ENCODE measurements at regions of chr11 and their contacts with region 1.

Region 1: DNA sequence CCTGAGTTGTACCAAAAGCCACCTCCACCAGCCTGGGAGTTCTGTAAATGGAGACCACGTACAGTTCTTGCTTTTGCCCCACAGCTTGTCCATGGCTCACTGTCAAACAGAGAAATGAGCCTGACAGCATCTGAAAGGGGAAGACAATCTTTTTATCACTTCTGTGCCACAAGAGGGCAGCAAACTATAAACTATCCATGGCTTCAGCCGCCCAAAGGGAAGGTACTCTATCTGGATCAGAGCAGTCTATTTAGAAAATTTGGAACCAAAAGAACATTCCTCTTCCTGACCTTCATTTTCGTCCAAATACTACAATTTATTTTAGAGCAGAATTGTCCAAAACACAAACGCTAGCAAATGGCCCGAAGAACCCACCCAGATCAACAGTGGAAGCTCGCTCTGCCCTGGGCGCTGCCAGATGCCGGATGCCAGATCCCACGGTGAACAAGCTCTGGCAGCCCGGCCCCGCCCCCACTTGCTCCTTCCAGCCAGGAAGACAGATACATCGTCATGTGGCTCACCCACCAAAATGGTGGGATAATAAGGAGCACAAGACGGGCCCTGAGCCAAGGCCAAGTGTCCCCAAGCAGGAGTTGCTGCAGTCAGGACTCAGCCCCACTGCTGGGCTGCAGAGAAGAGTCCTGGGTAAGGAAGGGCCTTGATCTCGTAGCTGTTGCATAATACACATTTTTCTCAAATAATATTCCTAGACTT is 23.9 kb upstream of the SCGB1A1 start:
- DNase-seq: peak; percentile 67
- H3K4me3 Mint-ChIP-seq: no peak overlapping the region
- H3K27ac Mint-ChIP-seq: no peak overlapping the region
- H3K4me1 Mint-ChIP-seq: peaks cover 17% of the 10 kb centered on the region
- H3K27me3 Mint-ChIP-seq: no peaks in the 10 kb centered on the region

Region 2: DNA sequence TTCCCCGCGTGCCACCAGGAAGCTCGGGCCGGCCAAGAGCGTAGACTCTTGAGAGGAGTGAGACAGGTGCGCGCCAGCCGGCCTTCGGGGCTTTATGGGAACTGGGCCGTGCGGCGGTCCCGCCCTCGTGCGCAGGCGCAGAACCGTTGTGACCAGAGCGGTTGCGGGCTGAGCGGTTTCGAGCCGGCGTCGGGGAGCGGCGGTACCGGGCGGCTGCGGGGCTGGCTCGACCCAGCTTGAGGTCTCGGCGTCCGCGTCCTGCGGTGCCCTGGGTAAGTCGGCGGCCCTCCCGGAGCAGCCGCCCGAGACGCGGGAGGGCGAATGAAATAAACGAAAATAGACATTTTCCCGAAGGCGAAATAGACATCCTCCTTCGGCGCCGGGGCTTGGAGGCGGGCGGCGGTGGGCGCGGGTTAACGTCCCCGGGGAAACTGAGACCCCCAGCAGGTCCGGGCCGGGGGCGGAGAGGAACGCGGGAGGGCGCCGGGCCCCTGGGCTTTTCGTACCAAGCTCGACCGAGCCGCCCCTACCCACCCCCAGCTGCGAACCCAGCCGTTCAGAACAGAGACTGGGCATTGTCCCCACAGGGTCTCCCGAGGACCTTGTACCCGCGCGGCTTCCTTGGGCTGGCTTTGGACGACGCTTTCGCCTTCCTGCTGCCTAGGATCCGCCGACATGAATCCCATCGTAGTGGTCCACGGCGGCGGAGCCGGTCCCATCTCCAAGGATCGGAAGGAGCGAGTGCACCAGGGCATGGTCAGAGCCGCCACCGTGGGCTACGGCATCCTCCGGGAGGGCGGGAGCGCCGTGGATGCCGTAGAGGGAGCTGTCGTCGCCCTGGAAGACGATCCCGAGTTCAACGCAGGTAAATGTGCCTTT is 57.4 kb before region 1 on chr11 and contains the start of gene ASRGL1:
- CTCF ChIA-PET with region 1: interaction called, 24 read pairs
- intact Hi-C with region 1: no loop called
- DNase-seq: peak; percentile 75
- H3K4me3 Mint-ChIP-seq: peak within 1 kb of the TSS; percentile 83
- H3K27ac Mint-ChIP-seq: peak within 1 kb of the TSS; percentile 16
- H3K4me1 Mint-ChIP-seq: peaks cover 9% of the 10 kb centered on the region
- H3K27me3 Mint-ChIP-seq: peaks cover 7% of the 10 kb centered on the region
- total RNA-seq, gene ASRGL1: 9.5 to 11.6 TPM

Region 3: DNA sequence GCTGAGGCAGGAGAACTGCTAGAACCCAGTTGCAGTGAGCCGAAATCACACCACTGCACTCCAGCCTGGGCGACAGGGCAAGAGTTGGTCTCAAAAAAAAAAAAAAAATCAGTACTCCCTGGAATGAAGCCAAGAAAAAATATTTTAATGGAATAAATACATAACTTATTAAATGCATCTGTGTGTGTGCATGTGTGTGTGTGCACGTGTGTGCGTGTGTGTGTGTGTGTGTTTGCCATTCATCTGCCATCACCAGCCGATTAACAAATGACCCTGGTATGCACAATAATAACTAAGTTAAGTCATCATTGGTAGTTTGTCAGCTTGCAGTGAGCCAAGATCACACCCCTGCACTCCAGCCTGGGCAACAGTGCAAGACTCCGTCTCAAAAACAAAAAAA is 11.2 kb before region 1 on chr11:
- CTCF ChIA-PET with region 1: interaction called, 6 read pairs
- intact Hi-C with region 1: loop called (anchors 1 kb)
- DNase-seq: no peak
- H3K4me3 Mint-ChIP-seq: no peak overlapping the region
- H3K27ac Mint-ChIP-seq: no peak overlapping the region
- H3K4me1 Mint-ChIP-seq: peaks cover 11% of the 10 kb centered on the region
- H3K27me3 Mint-ChIP-seq: no peaks in the 10 kb centered on the region

Region 4: DNA sequence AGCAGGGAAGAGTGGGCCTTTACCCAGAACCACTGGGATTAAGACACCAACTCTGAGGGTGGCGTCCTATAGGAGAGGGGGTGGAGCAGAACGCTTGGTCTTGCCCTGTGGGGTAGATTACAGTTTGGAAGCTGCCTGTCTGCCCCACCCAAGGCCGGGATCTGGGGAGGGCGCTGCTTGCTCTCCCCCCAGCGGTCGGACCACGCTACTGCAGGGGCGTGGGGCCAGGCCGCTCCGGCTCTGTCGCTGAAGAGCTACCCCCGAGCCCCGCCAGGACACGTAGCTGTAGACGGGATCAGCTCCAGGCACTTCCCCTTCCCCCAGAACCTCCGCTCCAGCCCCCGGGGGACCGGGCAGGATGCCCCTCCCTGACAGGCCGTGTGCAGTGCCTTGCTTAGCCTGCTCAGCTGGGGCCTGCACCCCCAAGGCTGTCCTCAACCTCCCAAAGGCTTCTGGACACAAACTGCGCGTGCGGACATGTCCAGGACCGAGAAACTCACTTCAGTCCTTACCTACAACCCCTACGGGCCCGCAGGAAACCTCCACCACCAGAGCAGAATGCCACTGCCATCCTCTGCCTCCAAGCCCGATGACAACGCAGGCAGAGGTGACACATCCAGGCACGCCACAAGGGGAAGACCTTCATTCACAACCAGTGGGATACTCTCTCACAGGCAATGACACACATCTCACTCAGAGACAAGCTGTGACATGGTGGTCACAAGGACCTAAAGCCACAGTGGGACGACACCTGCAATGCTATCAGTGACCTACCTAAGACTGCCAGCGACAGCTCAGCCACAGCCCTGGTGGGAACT is 148.0 kb after region 1 on chr11:
- CTCF ChIA-PET with region 1: interaction called, 33 read pairs
- intact Hi-C with region 1: loop called (anchors 1 kb)
- DNase-seq: peak; percentile 78
- H3K4me3 Mint-ChIP-seq: peak overlapping the region; percentile 32
- H3K27ac Mint-ChIP-seq: no peak overlapping the region
- H3K4me1 Mint-ChIP-seq: peaks cover 70% of the 10 kb centered on the region
- H3K27me3 Mint-ChIP-seq: peaks cover 4% of the 10 kb centered on the region

Region 5: GRCh38 chr11:62694455-62695167 is 299.6 kb after region 1 on chr11:
- CTCF ChIA-PET with region 1: interaction called, 3 read pairs
- intact Hi-C with region 1: loop called (anchors 10 kb)
- DNase-seq: peak; percentile 85
- H3K4me3 Mint-ChIP-seq: no peak overlapping the region
- H3K27ac Mint-ChIP-seq: peak overlapping the region; percentile 4
- H3K4me1 Mint-ChIP-seq: no peaks in the 10 kb centered on the region
- H3K27me3 Mint-ChIP-seq: no peaks in the 10 kb centered on the region

Region 6: DNA sequence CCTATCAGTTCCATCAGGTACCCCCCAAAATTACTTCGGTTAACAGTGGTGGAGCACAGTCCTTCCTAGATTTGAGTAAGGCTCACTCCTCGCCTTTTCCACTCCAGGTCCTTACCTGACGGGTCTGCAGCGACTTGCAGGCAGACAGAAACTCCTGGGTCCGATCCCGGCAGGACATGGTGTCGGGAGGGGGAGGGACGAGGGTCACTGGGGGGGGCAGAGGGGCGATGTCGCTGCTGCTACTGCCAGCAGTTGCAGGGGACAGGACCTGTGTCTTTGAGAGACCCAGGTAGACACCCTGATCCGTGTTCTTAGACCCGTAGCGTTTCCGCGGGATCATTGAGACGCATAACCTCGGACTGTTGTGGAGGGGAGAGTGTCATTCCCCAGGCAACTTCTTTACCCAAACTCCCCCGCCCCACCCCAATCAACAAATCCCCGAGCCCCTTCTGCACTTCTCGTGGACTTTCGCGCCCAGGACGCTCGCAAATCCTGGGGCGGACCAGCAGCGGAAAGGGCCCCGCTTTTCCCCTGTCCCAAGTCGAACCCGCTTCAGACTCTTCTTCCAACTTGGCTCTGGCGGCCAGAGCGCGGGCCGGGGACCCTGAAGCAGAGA is 436.0 kb after region 1 on chr11:
- CTCF ChIA-PET with region 1: no interaction called
- intact Hi-C with region 1: no loop called
- DNase-seq: peak; percentile 23
- H3K4me3 Mint-ChIP-seq: peak overlapping the region; percentile 99
- H3K27ac Mint-ChIP-seq: peak overlapping the region; percentile 100
- H3K4me1 Mint-ChIP-seq: peaks cover 40% of the 10 kb centered on the region
- H3K27me3 Mint-ChIP-seq: no peaks in the 10 kb centered on the region

Region 7: GRCh38 chr11:62860835-62861563 is 466.0 kb after region 1 on chr11:
- CTCF ChIA-PET with region 1: no interaction called
- intact Hi-C with region 1: loop called (anchors 5 kb)
- DNase-seq: no peak
- H3K4me3 Mint-ChIP-seq: no peak overlapping the region
- H3K27ac Mint-ChIP-seq: no peak overlapping the region
- H3K4me1 Mint-ChIP-seq: peaks cover 46% of the 10 kb centered on the region
- H3K27me3 Mint-ChIP-seq: no peaks in the 10 kb centered on the region